Activated CD4-positive, alpha-beta T cell treated with anti-CD3 and anti-CD28 coated beads for 36 hours (primary cell): ENCODE measurements at regions of chr9 and their contacts with region 1.

Region 1: DNA sequence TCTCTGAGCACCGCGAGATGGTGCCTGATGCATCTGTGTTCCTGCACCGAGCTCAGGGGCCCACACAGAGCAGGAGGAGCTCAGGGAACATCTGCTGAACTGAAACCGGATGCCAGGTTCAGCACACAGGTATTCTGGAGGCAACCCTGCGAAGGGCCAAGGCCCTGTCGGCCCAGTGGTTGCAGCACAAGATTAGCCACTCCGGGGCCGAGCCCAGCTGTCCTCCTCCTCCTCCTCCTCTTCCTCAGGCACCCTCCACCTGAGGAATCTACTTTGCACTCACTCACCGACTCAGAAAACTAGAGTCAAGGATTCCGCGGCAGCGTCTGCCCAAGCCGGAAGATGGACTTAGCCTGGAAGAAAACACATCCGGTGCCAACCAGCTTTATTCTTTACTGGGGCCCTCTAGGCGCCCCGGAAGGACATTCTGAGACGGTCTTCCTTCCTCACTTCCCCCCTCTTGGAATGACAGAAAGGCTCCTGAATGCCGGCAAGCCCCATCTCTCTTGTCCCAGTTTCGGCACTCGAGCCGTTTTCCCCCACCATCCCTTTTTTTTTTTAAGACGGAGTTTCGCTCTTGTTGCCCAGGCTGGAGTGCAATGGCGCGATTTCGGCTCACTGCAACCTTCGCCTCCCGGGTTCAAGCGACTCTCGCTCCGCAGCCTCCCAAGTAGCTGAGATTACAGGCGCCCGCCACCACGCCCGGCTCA is at the start of gene ZBTB6:
- DNase-seq: peak; percentile 86
- ATAC-seq: peak; percentile 96
- H3K4me3 Mint-ChIP-seq: peak within 1 kb of the TSS; percentile 100
- H3K27ac Mint-ChIP-seq: peak within 1 kb of the TSS; percentile 100
- H3K4me1 Mint-ChIP-seq: peaks cover 33% of the 10 kb centered on the region
- H3K27me3 Mint-ChIP-seq: no peaks in the 10 kb centered on the region
- total RNA-seq, gene ZBTB6: 8.8 to 9.3 TPM

Region 2: GRCh38 chr9:122931226-122932121 is 18.4 kb after region 1 on chr9 and contains the start of gene ZBTB26:
- CTCF ChIA-PET with region 1: interaction called, 5 read pairs
- POLR2A ChIA-PET with region 1: interaction called, 16 read pairs
- intact Hi-C with region 1: loop called (anchors 1 kb)
- DNase-seq: peak; percentile 95
- ATAC-seq: peak; percentile 99
- H3K4me3 Mint-ChIP-seq: no peak within 1 kb of the TSS
- H3K27ac Mint-ChIP-seq: peak within 1 kb of the TSS; percentile 98
- H3K4me1 Mint-ChIP-seq: peaks cover 12% of the 10 kb centered on the region
- H3K27me3 Mint-ChIP-seq: no peaks in the 10 kb centered on the region
- total RNA-seq, gene ZBTB26: 6.0 TPM

Region 3: DNA sequence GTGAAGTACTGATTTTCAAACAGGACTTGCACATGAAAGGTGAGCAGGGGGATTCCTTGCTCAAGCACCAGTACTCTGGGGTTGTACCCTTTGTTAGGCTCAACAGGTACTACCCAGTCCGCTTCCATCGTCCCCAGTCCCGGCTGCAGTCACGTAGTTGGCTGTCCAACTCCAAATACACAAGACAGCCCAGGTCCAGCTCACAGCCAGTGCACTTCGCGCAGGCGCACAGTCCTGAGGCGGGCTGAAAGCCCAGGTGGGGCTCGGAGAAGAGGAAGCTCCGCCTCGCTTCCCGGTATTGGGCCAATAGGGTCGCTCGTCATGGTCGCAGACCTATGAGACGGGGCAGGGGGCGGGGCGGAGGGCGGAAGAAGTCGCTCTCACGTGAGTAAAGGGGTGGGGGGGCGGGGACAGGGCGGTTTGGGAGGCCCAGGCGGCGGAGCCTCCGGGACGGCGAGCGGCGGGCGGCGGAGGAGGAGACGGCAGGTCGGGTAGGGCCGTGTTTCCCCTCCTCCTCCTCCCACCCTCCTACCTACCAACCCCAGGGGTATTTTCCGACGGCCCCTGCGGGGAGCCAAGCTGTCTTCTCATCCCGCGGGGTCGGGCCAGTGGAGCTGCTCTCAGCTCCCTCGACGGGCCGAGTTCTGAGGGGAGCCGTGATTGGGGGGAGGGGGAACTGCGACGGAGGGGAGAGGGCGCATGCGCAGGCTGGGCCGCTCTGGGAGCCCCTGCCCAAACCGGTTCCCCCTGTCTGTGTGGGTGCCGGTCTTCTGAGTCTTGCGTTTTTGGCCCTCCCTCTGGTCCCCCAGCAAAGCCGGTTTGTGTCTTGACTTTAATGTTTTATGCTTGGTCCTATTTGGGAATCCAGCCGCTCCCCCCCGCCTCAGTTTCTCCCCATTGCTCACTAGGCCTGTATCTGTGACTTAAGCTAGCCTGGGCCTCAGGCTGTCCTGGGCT is 27.8 kb after region 1 on chr9 and contains the start of gene RABGAP1:
- CTCF ChIA-PET with region 1: interaction called, 4 read pairs
- POLR2A ChIA-PET with region 1: interaction called, 18 read pairs
- intact Hi-C with region 1: loop called (anchors 1 to 2 kb)
- DNase-seq: peak; percentile 99
- ATAC-seq: peak; percentile 99
- H3K4me3 Mint-ChIP-seq: peak within 1 kb of the TSS; percentile 99
- H3K27ac Mint-ChIP-seq: peak within 1 kb of the TSS; percentile 95
- H3K4me1 Mint-ChIP-seq: peaks cover 33% of the 10 kb centered on the region
- H3K27me3 Mint-ChIP-seq: no peaks in the 10 kb centered on the region
- total RNA-seq, gene RABGAP1: 24.3 to 27.2 TPM

Region 4: GRCh38 chr9:123011878-123012528 is 98.9 kb after region 1 on chr9:
- CTCF ChIA-PET with region 1: no interaction called
- POLR2A ChIA-PET with region 1: no interaction called
- intact Hi-C with region 1: no loop called
- DNase-seq: no peak
- ATAC-seq: no peak
- H3K4me3 Mint-ChIP-seq: no peak overlapping the region
- H3K27ac Mint-ChIP-seq: no peak overlapping the region
- H3K4me1 Mint-ChIP-seq: no peaks in the 10 kb centered on the region
- H3K27me3 Mint-ChIP-seq: no peaks in the 10 kb centered on the region

Region 5: GRCh38 chr9:123305879-123306278 is 392.8 kb after region 1 on chr9:
- CTCF ChIA-PET with region 1: no interaction called
- POLR2A ChIA-PET with region 1: interaction called, 10 read pairs
- intact Hi-C with region 1: no loop called
- DNase-seq: no peak
- ATAC-seq: no peak
- H3K4me3 Mint-ChIP-seq: no peak overlapping the region
- H3K27ac Mint-ChIP-seq: no peak overlapping the region
- H3K4me1 Mint-ChIP-seq: peaks cover 36% of the 10 kb centered on the region
- H3K27me3 Mint-ChIP-seq: no peaks in the 10 kb centered on the region